Heart right ventricle (tissue), 16 donors: ENCODE measurements at regions of chr2 and their contacts with region 1.

Region 1: DNA sequence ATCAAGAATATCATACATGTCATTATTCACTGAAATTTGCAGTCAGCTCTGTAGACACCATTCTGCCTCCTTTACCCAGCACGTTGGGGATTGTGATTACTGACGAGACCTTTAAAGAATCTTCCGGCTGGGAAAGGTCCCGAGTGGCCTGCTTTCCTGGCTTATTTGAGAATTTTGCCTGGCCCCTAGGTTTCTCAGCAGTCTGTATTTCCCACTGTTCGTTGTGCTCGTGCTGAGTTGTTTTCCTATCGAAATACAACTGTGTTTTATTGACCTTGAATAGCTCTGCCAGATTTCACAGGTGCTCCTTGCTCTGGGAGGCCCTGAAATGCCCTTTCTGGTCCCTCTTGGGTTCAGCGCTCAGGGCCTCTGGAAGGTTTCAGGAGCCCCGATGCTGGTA is 94.9 kb downstream of the AGAP1 start:
- DNase-seq: no peak
- ATAC-seq: peak in 5 of 8 donors; percentile 26 to 48 (median 34)
- H3K4me3 ChIP-seq: no peak overlapping the region
- H3K27ac ChIP-seq: peak overlapping the region in 2 of 10 donors; percentile 6 to 22
- H3K4me1 ChIP-seq: peaks cover 0 to 18% (median 2%) of the 10 kb centered on the region in 9 donors
- H3K27me3 ChIP-seq: no peaks in the 10 kb centered on the region
- CTCF ChIP-seq: no peak

Region 2: DNA sequence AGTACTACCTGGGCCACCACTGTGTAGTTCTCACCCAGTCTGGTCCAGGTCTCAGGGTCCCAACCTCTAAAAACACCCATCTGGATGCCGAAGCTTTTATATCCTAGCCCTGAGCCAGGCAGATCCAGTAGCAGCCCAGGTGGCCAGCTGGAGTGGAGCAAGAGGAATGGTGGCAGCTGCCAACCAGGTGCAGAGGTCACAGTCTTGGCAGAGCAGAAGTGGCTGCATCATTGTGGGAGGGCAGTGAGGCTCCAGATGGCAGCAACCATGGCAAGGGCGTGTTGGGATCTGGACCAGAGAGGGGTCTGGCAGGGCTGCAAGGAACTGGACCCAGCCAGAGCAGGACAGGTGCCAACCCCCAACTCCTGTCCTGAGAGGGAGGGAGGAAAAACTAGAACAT is 167.1 kb before region 1 on chr2:
- intact Hi-C with region 1: loop called in 1 of 10 experiments (anchors 10 kb)
- DNase-seq: peak in 1 of 2 donors; percentile 31
- ATAC-seq: peak in 5 of 8 donors; percentile 49 to 58 (median 51)
- H3K4me3 ChIP-seq: no peak overlapping the region
- H3K27ac ChIP-seq: no peak overlapping the region
- H3K4me1 ChIP-seq: peaks cover 0 to 10% (median 4%) of the 10 kb centered on the region in 9 donors
- H3K27me3 ChIP-seq: no peaks in the 10 kb centered on the region
- CTCF ChIP-seq: no peak

Region 3: GRCh38 chr2:235500761-235501672 is 87.7 kb before region 1 on chr2:
- intact Hi-C with region 1: loop called in 3 of 10 experiments (anchors 5 to 10 kb)
- DNase-seq: no peak
- ATAC-seq: peak in 3 of 8 donors; percentile 59 to 68 (median 60)
- H3K4me3 ChIP-seq: peak overlapping the region in 6 of 10 donors; percentile 2 to 29 (median 23)
- H3K27ac ChIP-seq: peak overlapping the region in 6 of 10 donors; percentile 25 to 62 (median 46)
- H3K4me1 ChIP-seq: peaks cover 12 to 82% (median 43%) of the 10 kb centered on the region in 9 donors
- H3K27me3 ChIP-seq: peaks cover 0 to 5% (median 0%) of the 10 kb centered on the region in 7 donors
- CTCF ChIP-seq: no peak

Region 4: DNA sequence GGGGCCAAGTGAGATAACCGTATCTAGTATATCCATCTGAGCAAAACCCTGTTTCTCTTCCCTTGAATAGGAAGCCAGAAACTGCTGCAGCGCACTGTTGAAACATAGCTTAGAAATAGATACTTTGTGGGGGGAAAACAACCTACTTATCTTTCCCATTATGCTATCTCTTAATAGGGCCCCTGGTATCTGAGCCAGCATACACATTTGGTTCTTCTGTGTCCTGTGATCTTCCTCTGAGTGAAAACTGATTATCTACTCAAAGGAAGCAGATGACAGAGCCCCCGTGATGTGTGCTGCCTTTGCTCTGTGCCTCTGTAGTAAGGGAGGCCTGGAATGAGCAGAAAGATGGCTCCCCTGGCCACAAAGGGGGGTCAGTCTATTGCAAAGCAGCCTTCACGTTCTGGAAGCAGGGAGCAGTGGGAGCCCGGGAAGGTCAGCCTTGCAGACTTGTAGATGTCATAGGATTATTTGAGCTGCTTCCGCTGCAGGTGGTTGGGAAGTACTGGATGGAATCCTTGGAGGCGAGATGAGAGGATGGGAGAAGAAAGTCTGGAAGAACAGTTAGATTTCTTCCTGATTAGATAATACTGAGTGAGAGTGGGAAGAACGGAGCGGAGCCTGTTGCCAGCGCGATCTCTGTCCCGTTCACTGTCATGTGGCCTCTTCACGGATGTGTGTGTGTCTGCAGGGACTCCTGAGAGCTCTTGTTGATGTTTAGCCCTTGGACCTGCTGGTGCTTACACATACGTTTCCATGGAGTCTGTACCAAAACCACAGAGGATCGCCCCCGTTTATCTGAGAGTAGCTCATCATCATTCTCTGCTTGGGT is 55.1 kb after region 1 on chr2:
- intact Hi-C with region 1: no loop called
- DNase-seq: peak in 1 of 2 donors; percentile 26
- ATAC-seq: peak in 3 of 8 donors; percentile 8 to 17 (median 11)
- H3K4me3 ChIP-seq: no peak overlapping the region
- H3K27ac ChIP-seq: peak overlapping the region in 4 of 10 donors; percentile 1 to 79 (median 44)
- H3K4me1 ChIP-seq: peaks cover 17 to 74% (median 46%) of the 10 kb centered on the region in 9 donors
- H3K27me3 ChIP-seq: no peaks in the 10 kb centered on the region
- CTCF ChIP-seq: no peak

Region 5: DNA sequence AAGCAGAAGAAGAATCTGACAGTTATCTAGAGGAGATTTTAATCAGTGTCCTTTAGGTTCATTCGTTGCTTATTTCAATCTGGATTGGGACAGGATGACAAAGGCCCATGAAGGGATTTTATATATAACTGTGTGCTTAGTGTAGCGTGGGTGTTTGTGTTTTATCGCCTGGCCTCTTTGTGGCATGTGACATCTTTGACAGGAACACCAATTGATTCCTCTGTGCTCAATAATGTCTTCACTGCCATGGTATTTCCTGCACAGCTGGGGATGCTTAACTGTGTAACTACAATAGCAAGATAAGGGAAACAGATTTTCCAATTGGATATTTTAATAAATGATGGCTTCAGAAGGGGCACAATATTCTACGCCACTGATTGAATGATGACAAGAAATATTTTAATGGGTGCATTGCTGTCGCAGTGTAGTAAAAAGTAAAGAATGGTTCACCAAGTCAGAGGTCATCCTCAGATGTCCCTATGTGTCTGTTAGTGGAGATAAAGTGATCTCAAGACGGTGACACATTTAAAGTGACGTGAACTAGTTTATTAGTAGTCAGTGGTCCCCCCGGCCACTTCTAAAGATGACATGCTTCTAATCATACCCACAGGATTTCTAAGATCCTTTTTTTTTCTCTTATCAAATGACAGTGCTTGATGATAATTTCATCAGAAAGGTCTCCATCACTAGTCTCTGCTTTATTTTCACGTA is 65.5 kb after region 1 on chr2:
- intact Hi-C with region 1: no loop called
- DNase-seq: no peak
- ATAC-seq: no peak
- H3K4me3 ChIP-seq: no peak overlapping the region
- H3K27ac ChIP-seq: no peak overlapping the region
- H3K4me1 ChIP-seq: peaks cover 0 to 50% (median 14%) of the 10 kb centered on the region in 9 donors
- H3K27me3 ChIP-seq: peaks cover 0 to 11% (median 0%) of the 10 kb centered on the region in 7 donors
- CTCF ChIP-seq: no peak